ENCODE measurements at regions of chr9 and their contacts with region 1.

Region 1: DNA sequence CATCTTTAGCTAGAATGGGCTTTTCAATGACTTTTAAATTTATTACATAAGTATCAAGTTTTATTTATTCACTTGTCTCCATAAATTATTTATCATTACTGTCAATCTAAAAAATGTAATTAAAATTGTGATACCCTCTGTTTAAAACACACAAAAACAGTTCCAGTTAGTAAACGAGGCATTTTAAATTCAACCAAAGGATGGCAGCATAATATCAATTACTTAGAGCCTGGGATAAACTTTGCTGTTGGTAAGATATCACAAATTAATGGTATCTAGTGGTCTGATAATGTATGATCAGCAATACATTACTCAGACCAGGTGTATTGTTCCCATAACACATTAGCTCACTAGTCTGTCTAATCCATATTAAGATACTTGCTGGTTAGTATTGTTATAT is 9.6 kb upstream of the IFNE start:
- DNase-seq: no peak
- ATAC-seq: peak; percentile 17; the same call in 1 of the 2 replicates
- H3K4me3 ChIP-seq: no peak overlapping the region
- H3K27ac ChIP-seq: no peak overlapping the region
- H3K4me1 ChIP-seq: no peaks in the 10 kb centered on the region
- H3K27me3 ChIP-seq: no peaks in the 10 kb centered on the region
- CTCF ChIP-seq: peak; percentile 49
- POLR2A ChIP-seq: no peak
- RAD21 ChIP-seq: peak; percentile 48

Region 2: DNA sequence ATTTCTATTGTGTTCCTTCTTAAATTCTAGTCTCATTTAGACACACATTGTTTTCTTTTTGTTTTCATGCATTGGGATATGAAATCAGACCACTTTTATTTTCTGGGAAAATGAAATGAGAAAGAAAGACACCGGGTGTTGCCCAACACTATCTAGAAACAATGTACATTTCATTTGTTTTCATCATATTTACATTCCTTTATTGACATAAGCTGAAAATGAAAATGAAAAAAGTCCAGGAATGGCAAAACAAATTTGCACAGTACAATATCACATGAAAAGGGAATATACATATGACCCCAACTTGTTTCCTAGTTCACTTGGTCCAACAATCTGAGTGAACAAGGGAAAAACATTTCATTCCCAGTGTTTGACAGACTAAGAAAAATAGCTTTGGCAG is 30.4 kb before region 1 on chr9:
- CTCF ChIA-PET with region 1: no interaction called
- POLR2A ChIA-PET with region 1: no interaction called
- dilution Hi-C with region 1: no loop called
- in situ Hi-C with region 1: no loop called
- intact Hi-C with region 1: no loop called
- DNase-seq: no peak
- ATAC-seq: no peak
- H3K4me3 ChIP-seq: no peak overlapping the region
- H3K27ac ChIP-seq: no peak overlapping the region
- H3K4me1 ChIP-seq: no peaks in the 10 kb centered on the region
- H3K27me3 ChIP-seq: no peaks in the 10 kb centered on the region
- CTCF ChIP-seq: no peak
- POLR2A ChIP-seq: no peak
- RAD21 ChIP-seq: no peak

Region 3: GRCh38 chr9:21709464-21710058 is 217.8 kb after region 1 on chr9:
- CTCF ChIA-PET with region 1: no interaction called
- POLR2A ChIA-PET with region 1: no interaction called
- dilution Hi-C with region 1: no loop called
- in situ Hi-C with region 1: no loop called
- intact Hi-C with region 1: loop called (anchors 5 kb)
- DNase-seq: peak; percentile 53
- ATAC-seq: peak; percentile 69
- H3K4me3 ChIP-seq: no peak overlapping the region
- H3K27ac ChIP-seq: no peak overlapping the region
- H3K4me1 ChIP-seq: peaks cover 6% of the 10 kb centered on the region; the same call in 1 of the 2 replicates
- H3K27me3 ChIP-seq: no peaks in the 10 kb centered on the region
- CTCF ChIP-seq: peak; percentile 67
- POLR2A ChIP-seq: no peak
- RAD21 ChIP-seq: peak; percentile 56